ENCODE measurements at regions of chr20 and their contacts with region 1.

Region 1: GRCh38 chr20:24992487-24993205 is at the start of gene APMAP:
- DNase-seq: peak; percentile 94 to 97 (median 94)
- H3K4me3 ChIP-seq: peak within 1 kb of the TSS; percentile 55 to 93
- H3K4me3 Mint-ChIP-seq: peak within 1 kb of the TSS; percentile 93 to 98 (median 95)
- H3K27ac ChIP-seq: peak within 1 kb of the TSS; percentile 96
- H3K27ac Mint-ChIP-seq: peak within 1 kb of the TSS; percentile 95 to 99 (median 97)
- H3K4me1 ChIP-seq: peaks cover 49% of the 10 kb centered on the region
- H3K4me1 Mint-ChIP-seq: peaks cover 36 to 72% (median 54%) of the 10 kb centered on the region in 4 donors
- H3K27me3 ChIP-seq: no peaks in the 10 kb centered on the region
- H3K27me3 Mint-ChIP-seq: no peaks in the 10 kb centered on the region
- total RNA-seq, gene APMAP: 48.4 to 50.0 TPM

Region 2: GRCh38 chr20:24934101-24934661 is 58.5 kb before region 1 on chr20:
- CTCF ChIA-PET with region 1: interaction called, 11 read pairs
- POLR2A ChIA-PET with region 1: interaction called, 19 read pairs
- intact Hi-C with region 1: no loop called
- DNase-seq: no peak
- H3K4me3 ChIP-seq: no peak overlapping the region
- H3K4me3 Mint-ChIP-seq: no peak overlapping the region
- H3K27ac ChIP-seq: no peak overlapping the region
- H3K27ac Mint-ChIP-seq: no peak overlapping the region
- H3K4me1 ChIP-seq: peaks cover 24% of the 10 kb centered on the region
- H3K4me1 Mint-ChIP-seq: peaks cover 20 to 35% (median 28%) of the 10 kb centered on the region in 4 donors
- H3K27me3 ChIP-seq: no peaks in the 10 kb centered on the region
- H3K27me3 Mint-ChIP-seq: no peaks in the 10 kb centered on the region

Region 3: GRCh38 chr20:25042531-25043498 is 50.2 kb after region 1 on chr20:
- CTCF ChIA-PET with region 1: interaction called, 11 read pairs
- POLR2A ChIA-PET with region 1: interaction called, 3 read pairs
- intact Hi-C with region 1: no loop called
- DNase-seq: peak; percentile 63 to 71 (median 68)
- H3K4me3 ChIP-seq: no peak overlapping the region
- H3K4me3 Mint-ChIP-seq: peak overlapping the region; percentile 11 to 78 (median 58)
- H3K27ac ChIP-seq: peak overlapping the region; percentile 51
- H3K27ac Mint-ChIP-seq: peak overlapping the region; percentile 87 to 97 (median 95)
- H3K4me1 ChIP-seq: peaks cover 48% of the 10 kb centered on the region
- H3K4me1 Mint-ChIP-seq: peaks cover 14 to 62% (median 42%) of the 10 kb centered on the region in 4 donors
- H3K27me3 ChIP-seq: no peaks in the 10 kb centered on the region
- H3K27me3 Mint-ChIP-seq: no peaks in the 10 kb centered on the region

Region 4: GRCh38 chr20:25090492-25091429 is 98.1 kb after region 1 on chr20:
- CTCF ChIA-PET with region 1: interaction called, 4 read pairs
- POLR2A ChIA-PET with region 1: interaction called, 15 read pairs
- intact Hi-C with region 1: no loop called
- DNase-seq: peak; percentile 80 to 87 (median 82)
- H3K4me3 ChIP-seq: peak overlapping the region in 1 of 2 donors; percentile 23
- H3K4me3 Mint-ChIP-seq: peak overlapping the region in 7 of 8 donors; percentile 40 to 87 (median 71)
- H3K27ac ChIP-seq: peak overlapping the region; percentile 30
- H3K27ac Mint-ChIP-seq: peak overlapping the region; percentile 60 to 92 (median 87)
- H3K4me1 ChIP-seq: peaks cover 37% of the 10 kb centered on the region
- H3K4me1 Mint-ChIP-seq: peaks cover 31 to 38% (median 35%) of the 10 kb centered on the region in 4 donors
- H3K27me3 ChIP-seq: peaks cover 3% of the 10 kb centered on the region
- H3K27me3 Mint-ChIP-seq: peaks cover under 1 to 5% of the 10 kb centered on the region in 2 donors

Region 5: GRCh38 chr20:25247956-25248785 is 255.5 kb after region 1 on chr20 and contains the start of gene PYGB:
- CTCF ChIA-PET with region 1: interaction called, 3 read pairs
- POLR2A ChIA-PET with region 1: interaction called, 3 read pairs
- intact Hi-C with region 1: loop called (anchors 5 kb)
- DNase-seq: peak; percentile 63 to 80 (median 72)
- H3K4me3 ChIP-seq: peak within 1 kb of the TSS; percentile 65 to 94
- H3K4me3 Mint-ChIP-seq: peak within 1 kb of the TSS; percentile 94 to 97 (median 95)
- H3K27ac ChIP-seq: peak within 1 kb of the TSS; percentile 59
- H3K27ac Mint-ChIP-seq: peak within 1 kb of the TSS; percentile 69 to 94 (median 92)
- H3K4me1 ChIP-seq: peaks cover 30% of the 10 kb centered on the region
- H3K4me1 Mint-ChIP-seq: peaks cover 25 to 55% (median 38%) of the 10 kb centered on the region in 4 donors
- H3K27me3 ChIP-seq: no peaks in the 10 kb centered on the region
- H3K27me3 Mint-ChIP-seq: peaks cover 0 to 2% of the 10 kb centered on the region in 2 donors
- total RNA-seq, gene PYGB: 34.0 to 35.6 TPM

Region 6: DNA sequence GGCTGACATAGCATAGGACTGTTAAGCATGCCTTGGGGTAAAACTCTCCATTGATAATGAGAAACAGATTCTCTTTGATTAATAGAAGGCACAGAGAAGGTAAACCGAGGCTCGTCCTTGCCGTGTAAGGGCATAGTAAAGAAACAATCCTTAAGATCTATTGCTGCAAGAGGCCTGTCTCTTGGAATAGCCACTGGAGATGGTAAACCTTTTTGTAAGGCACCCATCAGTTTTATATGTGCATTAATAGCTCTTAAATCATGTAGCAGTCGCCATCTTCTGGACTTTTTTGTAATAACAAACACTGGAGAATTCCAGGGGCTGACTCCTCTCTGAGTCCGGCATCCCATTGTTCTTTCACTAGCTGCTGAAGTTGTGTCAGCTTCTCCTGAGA is 406.4 kb after region 1 on chr20:
- CTCF ChIA-PET with region 1: interaction called, 36 read pairs
- POLR2A ChIA-PET with region 1: interaction called, 3 read pairs
- intact Hi-C with region 1: loop called (anchors 1 kb)
- DNase-seq: peak in 4 of 5 donors; percentile 23 to 48 (median 42)
- H3K4me3 ChIP-seq: no peak overlapping the region
- H3K4me3 Mint-ChIP-seq: no peak overlapping the region
- H3K27ac ChIP-seq: no peak overlapping the region
- H3K27ac Mint-ChIP-seq: no peak overlapping the region
- H3K4me1 ChIP-seq: no peaks in the 10 kb centered on the region
- H3K4me1 Mint-ChIP-seq: no peaks in the 10 kb centered on the region
- H3K27me3 ChIP-seq: no peaks in the 10 kb centered on the region
- H3K27me3 Mint-ChIP-seq: no peaks in the 10 kb centered on the region